ENCODE measurements at regions of chr3 and their contacts with region 1.

Region 1: DNA sequence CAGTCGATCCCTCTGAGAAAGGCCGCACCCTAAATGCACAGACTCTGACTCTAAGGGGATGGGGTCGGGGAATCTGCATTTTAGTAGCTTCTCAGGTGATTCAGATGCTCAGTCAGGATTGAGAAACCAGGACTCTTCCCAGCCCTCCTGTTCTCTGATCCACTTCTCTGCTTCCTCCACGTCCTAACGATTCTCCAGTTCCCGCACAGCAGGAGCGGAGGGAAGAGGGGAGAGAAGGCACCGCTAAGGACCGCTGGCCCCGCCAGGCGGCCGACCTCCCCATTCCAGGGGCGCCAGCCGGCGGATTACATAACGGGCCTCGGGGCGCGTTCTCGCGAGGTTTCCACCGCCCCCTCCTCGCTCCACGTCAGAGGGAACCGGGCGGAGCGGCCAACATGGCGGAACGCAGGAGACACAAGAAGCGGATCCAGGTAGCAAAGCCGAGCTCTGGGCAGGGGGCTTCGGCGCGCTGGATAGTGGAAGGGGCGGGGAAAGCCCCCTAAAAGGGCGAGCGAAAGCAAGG is at the start of gene SEC62:
- DNase-seq: peak; percentile 73 to 96
- H3K4me3 ChIP-seq: peak within 1 kb of the TSS; percentile 79 to 89
- H3K27ac ChIP-seq: peak within 1 kb of the TSS; percentile 86 to 93
- H3K4me1 ChIP-seq: peaks cover 4 to 12% of the 10 kb centered on the region in 2 donors
- H3K27me3 ChIP-seq: no peaks in the 10 kb centered on the region
- CTCF ChIP-seq: peak in 2 of 3 experiments; percentile 33 to 38
- total RNA-seq, gene SEC62: 20.5 TPM

Region 2: GRCh38 chr3:169772897-169773828 is 193.3 kb before region 1 on chr3 and contains the start of gene MYNN:
- intact Hi-C with region 1: loop called (anchors 5 kb)
- DNase-seq: peak; percentile 74 to 96
- H3K4me3 ChIP-seq: peak within 1 kb of the TSS; percentile 75 to 78
- H3K27ac ChIP-seq: peak within 1 kb of the TSS; percentile 96 to 97
- H3K4me1 ChIP-seq: peaks cover 7 to 14% of the 10 kb centered on the region in 2 donors
- H3K27me3 ChIP-seq: no peaks in the 10 kb centered on the region
- CTCF ChIP-seq: peak in 1 of 3 experiments; percentile 11
- total RNA-seq, gene MYNN: 3.9 TPM

Region 3: GRCh38 chr3:169863458-169863899 is 103.0 kb before region 1 on chr3:
- intact Hi-C with region 1: loop called (anchors 2 kb)
- DNase-seq: peak in 1 of 2 donors; percentile 74
- H3K4me3 ChIP-seq: no peak overlapping the region
- H3K27ac ChIP-seq: no peak overlapping the region
- H3K4me1 ChIP-seq: no peaks in the 10 kb centered on the region
- H3K27me3 ChIP-seq: no peaks in the 10 kb centered on the region
- CTCF ChIP-seq: peak; percentile 75 to 90 (median 80)

Region 4: DNA sequence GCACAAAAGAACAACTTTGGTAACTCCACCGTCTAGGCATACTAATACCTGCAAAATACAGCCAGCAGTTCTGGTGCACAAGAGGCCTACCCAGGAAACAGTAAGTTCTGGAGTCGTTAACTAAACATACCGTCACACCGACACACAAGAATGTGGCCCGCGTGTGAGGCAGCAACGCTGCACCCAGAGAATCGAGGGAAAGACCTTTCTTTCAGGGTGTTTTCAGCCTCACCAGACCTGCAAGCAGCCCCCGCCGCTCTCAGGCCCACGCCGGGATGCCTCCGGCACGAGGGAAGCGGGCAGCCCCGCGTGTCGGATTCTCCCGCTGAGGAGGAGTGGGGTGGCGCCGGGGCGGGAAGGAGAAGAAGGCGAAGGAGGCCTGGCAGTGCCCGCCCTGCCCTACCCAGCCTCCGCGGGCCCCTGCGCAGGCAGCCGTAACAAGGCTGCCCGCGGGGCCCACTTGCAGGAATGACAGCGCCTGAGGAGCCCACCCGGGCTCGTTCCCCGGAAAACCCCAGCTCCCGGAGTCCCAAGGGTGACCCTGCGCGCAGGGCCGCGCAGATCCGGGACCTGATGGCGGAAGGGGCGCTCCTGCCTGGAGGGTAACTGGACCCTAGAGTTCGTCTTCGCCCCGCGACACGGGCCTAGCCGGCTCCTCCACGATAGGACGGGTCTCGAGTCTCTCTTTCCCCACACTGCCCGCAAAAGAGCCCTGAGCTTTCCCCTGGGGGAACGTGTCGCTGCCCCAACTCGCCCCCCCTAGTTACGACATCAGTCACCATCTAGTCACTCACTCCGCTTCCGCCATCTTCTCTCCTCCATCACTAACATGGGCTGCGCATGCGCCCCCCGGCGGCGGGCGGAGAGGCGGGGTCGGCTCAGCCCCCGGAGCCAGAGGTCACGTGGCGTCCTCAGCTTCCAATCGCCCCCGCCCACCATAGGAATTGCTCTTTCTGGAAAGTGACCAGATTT is 214.7 kb after region 1 on chr3 and contains the start of gene PHC3:
- intact Hi-C with region 1: loop called (anchors 2 kb)
- DNase-seq: peak; percentile 78 to 97
- H3K4me3 ChIP-seq: peak within 1 kb of the TSS; percentile 80 to 85
- H3K27ac ChIP-seq: peak within 1 kb of the TSS; percentile 97 to 98
- H3K4me1 ChIP-seq: peaks cover 0 to 15% of the 10 kb centered on the region in 2 donors
- H3K27me3 ChIP-seq: no peaks in the 10 kb centered on the region
- CTCF ChIP-seq: peak in 1 of 3 experiments; percentile 22
- total RNA-seq, gene PHC3: 43.3 TPM

Region 5: DNA sequence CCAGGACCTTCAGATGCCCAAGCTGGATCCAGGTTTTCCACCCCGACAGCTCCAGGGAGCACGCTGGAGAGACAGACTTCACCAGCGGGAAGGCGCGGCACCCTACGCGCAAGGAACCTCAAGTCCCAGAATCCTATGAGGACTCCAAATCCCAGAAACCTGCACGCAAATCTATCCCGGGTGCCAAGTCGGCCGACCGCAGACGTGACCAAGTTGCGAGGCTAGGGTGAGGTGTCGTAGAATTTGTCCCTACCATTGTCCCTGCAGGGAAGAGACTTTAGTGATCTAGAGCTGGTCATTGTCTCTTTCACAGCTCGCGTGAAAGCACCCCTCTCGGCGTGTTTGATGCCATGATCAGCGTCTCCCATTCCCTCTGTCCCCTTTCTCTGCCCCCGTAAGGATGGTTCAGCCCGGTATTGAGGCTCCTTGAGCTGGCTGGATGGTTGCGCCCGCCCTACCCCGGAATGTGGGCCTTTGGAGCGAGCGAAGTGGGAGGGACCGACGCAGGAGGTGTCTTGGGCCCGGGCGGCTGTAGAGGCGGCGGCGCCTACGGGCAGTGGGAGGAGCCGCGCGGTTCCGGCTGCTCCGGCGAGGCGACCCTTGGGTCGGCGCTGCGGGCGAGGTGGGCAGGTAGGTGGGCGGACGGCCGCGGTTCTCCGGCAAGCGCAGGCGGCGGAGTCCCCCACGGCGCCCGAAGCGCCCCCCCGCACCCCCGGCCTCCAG is 255.6 kb after region 1 on chr3 and contains the start of gene PRKCI:
- intact Hi-C with region 1: loop called (anchors 1 kb)
- DNase-seq: peak; percentile 80 to 97
- H3K4me3 ChIP-seq: peak within 1 kb of the TSS; percentile 96 to 97
- H3K27ac ChIP-seq: peak within 1 kb of the TSS; percentile 94 to 96
- H3K4me1 ChIP-seq: peaks cover 0 to 17% of the 10 kb centered on the region in 2 donors
- H3K27me3 ChIP-seq: no peaks in the 10 kb centered on the region
- CTCF ChIP-seq: no peak
- total RNA-seq, gene PRKCI: 20.3 TPM